SK-N-SH (cell line): ENCODE measurements at regions of chr2 and their contacts with region 1.

Region 1: DNA sequence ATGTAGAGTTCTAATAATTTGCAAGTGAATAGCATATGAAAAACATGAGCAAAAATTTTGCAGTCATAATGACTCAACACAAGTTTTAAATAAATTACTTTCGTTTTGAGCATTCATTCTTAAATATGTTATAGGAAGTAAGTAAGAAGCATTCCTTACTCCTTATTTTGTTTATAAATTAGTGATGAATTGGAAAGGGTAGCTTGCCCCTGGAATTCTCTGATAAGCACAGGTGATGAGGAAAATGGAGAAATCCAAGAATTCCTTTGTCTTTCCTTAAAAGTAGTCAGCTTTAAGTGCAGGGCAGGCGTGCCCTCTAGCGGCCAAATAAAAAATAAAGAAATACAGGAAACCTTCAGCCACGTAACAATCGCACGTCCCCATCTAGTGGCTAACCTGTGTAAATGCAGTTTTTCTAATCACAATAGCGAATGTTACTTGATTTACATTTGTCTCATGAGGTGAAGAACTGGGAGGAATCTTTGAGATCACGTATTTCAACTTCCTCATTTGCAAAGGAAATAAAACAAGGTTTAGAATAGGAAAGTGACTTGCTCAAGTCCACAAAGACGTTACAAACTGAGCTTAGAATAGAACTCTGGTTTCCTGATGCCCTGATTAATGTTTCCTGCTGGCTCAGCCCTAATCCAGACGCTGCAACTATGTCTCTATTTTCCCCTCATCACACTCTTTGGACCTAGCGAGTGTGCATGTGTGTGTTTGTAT is 47.2 kb upstream of the ZNG1B start:
- DNase-seq: peak; percentile 75
- H3K4me3 ChIP-seq: peak overlapping the region; percentile 24 to 66; a peak in 3 of 4 replicates
- H3K27ac ChIP-seq: no peak overlapping the region; a peak in 1 of 4 replicates
- H3K4me1 ChIP-seq: no peaks in the 10 kb centered on the region
- H3K27me3 ChIP-seq: peaks cover 37% of the 10 kb centered on the region; the same call in 1 of the 2 replicates
- CTCF ChIP-seq: peak; percentile 99
- EP300 ChIP-seq: no peak
- RAD21 ChIP-seq: peak; percentile 89

Region 2: GRCh38 chr2:113157118-113157896 is 233.0 kb before region 1 on chr2:
- CTCF ChIA-PET with region 1: interaction called, 10 read pairs
- POLR2A ChIA-PET with region 1: no interaction called
- DNase-seq: peak; percentile 44
- H3K4me3 ChIP-seq: no peak overlapping the region
- H3K27ac ChIP-seq: no peak overlapping the region
- H3K4me1 ChIP-seq: no peaks in the 10 kb centered on the region
- H3K27me3 ChIP-seq: peaks cover 35% of the 10 kb centered on the region; the same call in 1 of the 2 replicates
- CTCF ChIP-seq: no peak
- EP300 ChIP-seq: no peak
- RAD21 ChIP-seq: no peak

Region 3: DNA sequence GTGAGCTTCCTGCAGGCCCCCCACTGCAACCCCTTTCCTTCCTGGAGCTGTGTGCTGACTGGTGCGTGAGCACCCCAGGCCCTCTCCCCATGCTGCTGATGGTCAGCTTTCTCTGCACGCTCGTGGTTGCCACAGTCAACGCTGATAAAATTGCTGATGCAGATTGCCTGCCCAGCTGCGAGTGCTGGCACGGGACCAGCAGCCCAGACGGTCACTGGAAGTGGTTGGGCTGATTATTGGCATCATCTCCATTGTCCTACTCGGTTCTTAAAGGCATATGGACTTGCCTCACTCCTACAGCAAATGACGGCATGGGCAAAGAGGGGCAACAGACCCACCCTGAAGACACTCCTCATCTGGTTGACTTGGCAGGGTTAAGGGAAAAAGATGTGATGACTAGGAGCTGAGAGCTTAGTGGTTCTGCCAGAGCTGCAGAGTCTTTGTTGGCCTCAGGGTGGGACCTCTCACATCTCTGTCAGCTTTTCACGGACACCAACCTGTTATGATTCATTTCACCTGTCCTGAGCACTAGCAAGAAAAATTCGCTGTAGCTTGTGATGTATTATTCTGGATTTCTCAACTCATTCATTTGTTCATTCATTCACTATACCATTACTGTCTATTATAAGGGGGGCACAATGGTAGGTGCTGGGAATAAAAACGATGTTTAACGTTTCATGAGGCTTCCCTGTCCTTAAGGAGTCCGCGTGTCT is 150.0 kb before region 1 on chr2:
- CTCF ChIA-PET with region 1: interaction called, 14 read pairs
- POLR2A ChIA-PET with region 1: no interaction called
- DNase-seq: peak; percentile 89
- H3K4me3 ChIP-seq: peak overlapping the region in 1 of 2 experiments; percentile 11; a peak in 1 of 4 replicates
- H3K27ac ChIP-seq: peak overlapping the region; percentile 22 to 84
- H3K4me1 ChIP-seq: peaks cover 21 to 22% of the 10 kb centered on the region in 2 experiments
- H3K27me3 ChIP-seq: no peaks in the 10 kb centered on the region
- CTCF ChIP-seq: 0 out of 2 replicates have a peak, but pooled peaks have one; percentile 8
- EP300 ChIP-seq: peak; percentile 44 to 54; a peak in 2 of 4 replicates
- RAD21 ChIP-seq: no peak

Region 4: GRCh38 chr2:113257516-113258264 is 132.6 kb before region 1 on chr2:
- CTCF ChIA-PET with region 1: interaction called, 17 read pairs
- POLR2A ChIA-PET with region 1: no interaction called
- DNase-seq: no peak
- H3K4me3 ChIP-seq: no peak overlapping the region
- H3K27ac ChIP-seq: no peak overlapping the region
- H3K4me1 ChIP-seq: no peaks in the 10 kb centered on the region
- H3K27me3 ChIP-seq: peaks cover 65% of the 10 kb centered on the region; the same call in 1 of the 2 replicates
- CTCF ChIP-seq: no peak
- EP300 ChIP-seq: no peak
- RAD21 ChIP-seq: no peak

Region 5: GRCh38 chr2:113376913-113377445 is 13.3 kb before region 1 on chr2:
- CTCF ChIA-PET with region 1: interaction called, 17 read pairs
- POLR2A ChIA-PET with region 1: no interaction called
- DNase-seq: no peak
- H3K4me3 ChIP-seq: no peak overlapping the region
- H3K27ac ChIP-seq: no peak overlapping the region
- H3K4me1 ChIP-seq: no peaks in the 10 kb centered on the region
- H3K27me3 ChIP-seq: peaks cover 53% of the 10 kb centered on the region; the same call in 1 of the 2 replicates
- CTCF ChIP-seq: no peak
- EP300 ChIP-seq: no peak
- RAD21 ChIP-seq: no peak

Region 6: DNA sequence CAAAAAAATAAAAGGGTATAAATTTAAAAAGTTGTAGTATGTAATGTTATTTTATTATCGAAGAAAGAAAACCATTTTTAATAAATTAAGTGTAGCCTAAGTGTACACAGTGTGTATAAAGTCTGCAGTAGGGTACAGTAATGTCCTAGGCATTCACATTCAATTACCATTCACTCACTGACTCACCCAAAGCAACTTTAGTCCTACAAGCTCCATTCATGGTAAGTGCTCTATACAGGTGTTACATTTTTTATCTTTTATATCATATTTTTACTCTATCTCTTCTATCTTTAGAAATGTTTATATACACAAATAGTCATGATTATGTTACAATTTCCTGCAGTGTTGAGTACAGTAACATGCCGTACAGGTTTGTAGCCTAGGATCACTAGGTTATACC is 296.2 kb after region 1 on chr2:
- CTCF ChIA-PET with region 1: no interaction called
- POLR2A ChIA-PET with region 1: no interaction called
- DNase-seq: no peak
- H3K4me3 ChIP-seq: no peak overlapping the region
- H3K27ac ChIP-seq: no peak overlapping the region
- H3K4me1 ChIP-seq: no peaks in the 10 kb centered on the region
- H3K27me3 ChIP-seq: no peaks in the 10 kb centered on the region; the same call in 1 of the 2 replicates
- CTCF ChIP-seq: no peak
- EP300 ChIP-seq: no peak
- RAD21 ChIP-seq: no peak